ENCODE measurements at regions of chr14 and their contacts with region 1.

Region 1: GRCh38 chr14:24710403-24711112 is 76.6 kb upstream of the GZMB start:
- DNase-seq: peak; percentile 54
- ATAC-seq: peak; percentile 54

Region 2: DNA sequence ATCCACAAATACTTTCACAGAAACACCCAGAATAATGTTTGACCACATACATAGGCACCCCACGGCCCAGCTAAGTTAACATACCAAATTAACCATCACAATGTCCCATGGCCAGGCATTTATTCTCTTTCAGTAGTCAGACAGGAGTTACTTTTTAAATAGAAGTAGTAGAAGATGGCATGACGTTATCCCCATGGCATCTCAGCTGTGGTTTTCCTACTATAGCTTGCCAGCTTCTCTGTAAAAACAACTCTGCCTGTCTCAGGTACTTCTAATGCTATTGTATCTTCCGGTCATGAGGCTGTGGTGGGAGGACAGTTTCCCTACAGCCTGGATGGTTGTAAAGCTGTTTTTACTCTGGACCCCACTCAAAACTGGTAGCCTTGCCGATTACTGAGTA is 153.8 kb before region 1 on chr14:
- intact Hi-C with region 1: no loop called
- DNase-seq: no peak
- ATAC-seq: no peak

Region 3: GRCh38 chr14:24680516-24680915 is 30.0 kb before region 1 on chr14:
- intact Hi-C with region 1: no loop called
- DNase-seq: no peak
- ATAC-seq: peak; percentile 45

Region 4: DNA sequence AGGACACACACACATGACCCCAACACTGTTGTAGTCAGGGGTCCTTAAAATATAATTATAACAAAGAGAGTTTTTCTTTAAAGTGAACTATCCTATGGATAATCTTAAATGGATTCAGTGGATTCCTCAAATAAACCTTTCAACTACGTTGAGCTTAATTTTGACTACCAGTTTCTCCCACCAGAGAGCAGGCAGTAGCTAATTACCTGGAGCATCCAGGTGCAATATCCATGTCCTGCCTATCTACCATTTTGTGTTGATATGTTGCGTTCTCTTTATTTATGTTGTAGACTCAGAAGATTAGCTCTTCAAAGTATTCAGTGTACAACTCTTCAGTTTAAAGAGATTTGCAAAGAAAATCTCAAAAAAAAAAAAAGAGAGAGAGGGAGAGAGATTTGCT is 50.6 kb after region 1 on chr14:
- intact Hi-C with region 1: no loop called
- DNase-seq: no peak
- ATAC-seq: no peak

Region 5: GRCh38 chr14:25086821-25087396 is 376.4 kb after region 1 on chr14:
- intact Hi-C with region 1: no loop called
- DNase-seq: no peak
- ATAC-seq: no peak

Region 6: DNA sequence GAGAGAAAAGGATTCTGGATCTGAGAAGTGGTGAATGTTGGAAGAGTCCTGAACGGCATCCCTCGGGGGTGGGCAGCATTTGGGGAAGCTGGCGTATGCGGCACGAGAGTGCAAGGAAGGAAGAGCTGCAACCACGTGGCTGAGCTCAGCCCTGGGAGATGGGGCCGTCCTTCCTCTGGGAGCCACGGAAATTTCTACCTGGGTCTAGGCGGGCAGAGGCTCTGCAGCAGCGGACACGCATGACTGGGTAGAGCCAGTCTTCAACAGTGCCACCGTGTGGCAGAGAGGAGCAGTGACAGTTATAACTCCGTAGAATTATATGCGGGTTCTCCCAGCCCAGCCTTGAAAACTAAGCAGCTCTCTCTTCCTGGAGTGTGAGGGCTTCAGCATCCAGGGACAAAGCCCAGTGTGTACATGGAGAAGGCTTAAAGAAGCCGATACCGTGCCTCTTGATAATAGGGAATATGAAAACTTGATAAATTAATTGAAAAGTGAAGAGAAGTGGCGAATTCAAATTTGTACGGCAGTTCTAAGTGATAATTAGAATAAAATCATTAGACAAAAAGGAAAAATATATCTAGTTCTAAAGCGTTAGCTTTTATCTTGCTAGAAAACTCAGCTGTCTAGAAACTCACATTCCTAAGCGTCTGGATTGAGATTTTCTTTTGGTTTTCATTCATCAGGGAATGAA is 422.3 kb after region 1 on chr14:
- intact Hi-C with region 1: loop called (anchors 5 kb)
- DNase-seq: peak; percentile 76
- ATAC-seq: peak; percentile 98

Region 7: DNA sequence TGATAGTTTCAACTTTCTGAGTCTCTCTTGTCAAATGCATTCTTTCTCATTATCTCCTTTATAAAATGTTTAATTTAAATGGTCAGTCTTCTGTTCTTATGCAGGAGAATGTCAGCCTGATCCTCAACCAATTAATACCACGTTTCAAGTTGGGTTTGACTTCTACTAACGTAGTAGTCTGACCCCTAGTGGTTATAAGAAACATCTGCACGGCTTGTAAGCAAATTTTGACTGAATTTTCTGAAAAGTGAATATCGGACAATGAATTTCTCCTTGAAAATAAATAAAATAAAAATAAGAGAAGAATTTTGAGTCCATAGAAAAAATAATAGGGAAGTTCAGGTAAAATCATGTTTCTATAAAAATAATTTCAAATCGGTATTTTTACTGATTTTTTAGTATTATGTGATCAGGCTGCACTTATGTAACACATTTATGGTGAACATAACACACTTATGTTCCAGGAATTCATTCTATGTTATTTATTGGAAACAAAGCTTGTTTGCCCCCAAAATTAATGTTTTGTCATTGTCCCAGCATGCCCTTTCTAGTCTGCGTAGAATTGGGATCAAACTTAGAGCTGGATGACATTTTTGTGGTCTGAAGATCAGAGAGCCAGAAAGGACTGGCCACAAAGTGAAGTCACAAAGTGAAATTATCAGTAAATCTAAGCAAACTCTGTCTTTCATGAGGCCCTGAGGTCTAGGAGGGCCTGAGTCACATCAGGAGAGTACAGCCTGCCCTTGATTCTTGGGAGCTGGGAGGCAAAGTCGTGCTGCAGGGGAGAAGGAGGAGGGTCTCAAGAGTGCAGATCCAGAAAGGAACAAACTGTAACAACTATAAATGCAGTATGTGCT is 440.6 kb after region 1 on chr14:
- intact Hi-C with region 1: loop called (anchors 1 kb)
- DNase-seq: no peak
- ATAC-seq: no peak

Region 8: GRCh38 chr14:25237845-25238244 is 527.3 kb after region 1 on chr14:
- intact Hi-C with region 1: loop called (anchors 5 kb)
- DNase-seq: no peak
- ATAC-seq: no peak

Region 9: DNA sequence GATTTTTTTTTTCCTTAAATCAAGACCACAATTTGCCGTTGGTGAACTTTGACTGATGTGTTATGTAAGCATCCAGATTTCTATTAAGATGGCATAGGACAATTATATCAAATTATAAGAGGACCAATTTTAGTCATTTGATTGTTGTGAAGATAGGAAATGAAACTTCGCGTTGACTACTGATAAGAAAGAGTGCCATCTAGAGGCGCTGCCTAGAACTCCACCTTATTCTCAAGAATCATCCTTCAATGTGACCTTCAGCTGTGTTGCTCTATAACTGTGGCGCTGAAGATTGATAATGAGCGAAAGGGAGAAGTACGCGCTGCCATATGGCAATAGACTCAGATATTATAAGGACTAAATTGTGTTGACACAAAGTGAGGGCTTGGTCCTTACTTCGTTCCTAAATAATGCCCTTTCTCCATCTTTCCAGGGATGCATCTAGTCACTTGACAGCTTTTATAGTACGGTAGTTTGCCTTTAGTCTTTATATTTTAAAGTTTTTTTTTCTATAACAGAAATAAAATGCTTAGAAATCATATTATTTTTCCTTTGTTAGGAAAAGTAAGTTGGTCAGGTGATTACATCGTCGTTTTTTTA is 690.1 kb after region 1 on chr14:
- intact Hi-C with region 1: loop called (anchors 5 kb)
- DNase-seq: no peak
- ATAC-seq: no peak